Ovary (tissue), 10 donors: ENCODE measurements at regions of chr1 and their contacts with region 1.

Region 1: GRCh38 chr1:229171934-229172333 is 99.0 kb upstream of the RAB4A start:
- DNase-seq: no peak
- H3K4me3 ChIP-seq: no peak overlapping the region
- H3K27ac ChIP-seq: no peak overlapping the region
- H3K4me1 ChIP-seq: peaks cover 4% of the 10 kb centered on the region
- H3K27me3 ChIP-seq: no peaks in the 10 kb centered on the region
- CTCF ChIP-seq: no peak
- EP300 ChIP-seq: no peak
- POLR2A ChIP-seq: no peak

Region 2: GRCh38 chr1:229117664-229118300 is 54.2 kb before region 1 on chr1:
- intact Hi-C with region 1: no loop called
- DNase-seq: peak; percentile 64 to 86 (median 81)
- H3K4me3 ChIP-seq: no peak overlapping the region
- H3K27ac ChIP-seq: no peak overlapping the region
- H3K4me1 ChIP-seq: peaks cover 6% of the 10 kb centered on the region
- H3K27me3 ChIP-seq: no peaks in the 10 kb centered on the region
- CTCF ChIP-seq: no peak
- EP300 ChIP-seq: no peak
- POLR2A ChIP-seq: no peak

Region 3: GRCh38 chr1:229221104-229222019 is 49.4 kb after region 1 on chr1:
- intact Hi-C with region 1: loop called in 1 of 4 experiments (anchors 2 kb)
- DNase-seq: no peak
- H3K4me3 ChIP-seq: no peak overlapping the region
- H3K27ac ChIP-seq: no peak overlapping the region
- H3K4me1 ChIP-seq: no peaks in the 10 kb centered on the region
- H3K27me3 ChIP-seq: no peaks in the 10 kb centered on the region
- CTCF ChIP-seq: no peak
- EP300 ChIP-seq: no peak
- POLR2A ChIP-seq: no peak